Common myeloid progenitor, CD34-positive (primary cell): ENCODE measurements at regions of chr6 and their contacts with region 1.

Region 1: GRCh38 chr6:25992413-25993037 is 29.9 kb downstream of the TRIM38 start:
- DNase-seq: peak; percentile 94 to 97 (median 97)
- H3K4me3 ChIP-seq: peak overlapping the region; percentile 77 to 96 (median 81)
- H3K27ac ChIP-seq: peak overlapping the region; percentile 91 to 92
- H3K4me1 ChIP-seq: peaks cover 8 to 30% (median 20%) of the 10 kb centered on the region in 4 experiments
- H3K27me3 ChIP-seq: no peaks in the 10 kb centered on the region

Region 2: DNA sequence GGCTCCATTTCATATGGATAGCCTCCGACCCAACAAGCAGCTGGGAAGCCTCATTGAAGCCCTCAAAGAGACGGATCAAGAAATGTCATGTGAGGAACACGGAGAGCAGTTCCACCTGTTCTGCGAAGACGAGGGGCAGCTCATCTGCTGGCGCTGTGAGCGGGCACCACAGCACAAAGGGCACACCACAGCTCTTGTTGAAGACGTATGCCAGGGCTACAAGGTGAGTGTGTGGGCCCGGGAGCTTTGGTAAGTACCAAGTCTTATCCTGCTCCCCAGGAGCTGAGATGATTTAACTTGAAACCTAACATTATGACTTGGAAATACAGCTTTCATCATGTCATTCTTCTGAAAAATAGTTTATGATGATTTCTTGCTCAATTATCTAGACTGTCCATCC is 25.8 kb before region 1 on chr6:
- CTCF ChIA-PET with region 1: interaction called, 10 read pairs
- POLR2A ChIA-PET with region 1: interaction called, 3 read pairs
- DNase-seq: no peak
- H3K4me3 ChIP-seq: no peak overlapping the region
- H3K27ac ChIP-seq: no peak overlapping the region
- H3K4me1 ChIP-seq: peaks cover 17 to 31% (median 23%) of the 10 kb centered on the region in 4 experiments
- H3K27me3 ChIP-seq: no peaks in the 10 kb centered on the region

Region 3: DNA sequence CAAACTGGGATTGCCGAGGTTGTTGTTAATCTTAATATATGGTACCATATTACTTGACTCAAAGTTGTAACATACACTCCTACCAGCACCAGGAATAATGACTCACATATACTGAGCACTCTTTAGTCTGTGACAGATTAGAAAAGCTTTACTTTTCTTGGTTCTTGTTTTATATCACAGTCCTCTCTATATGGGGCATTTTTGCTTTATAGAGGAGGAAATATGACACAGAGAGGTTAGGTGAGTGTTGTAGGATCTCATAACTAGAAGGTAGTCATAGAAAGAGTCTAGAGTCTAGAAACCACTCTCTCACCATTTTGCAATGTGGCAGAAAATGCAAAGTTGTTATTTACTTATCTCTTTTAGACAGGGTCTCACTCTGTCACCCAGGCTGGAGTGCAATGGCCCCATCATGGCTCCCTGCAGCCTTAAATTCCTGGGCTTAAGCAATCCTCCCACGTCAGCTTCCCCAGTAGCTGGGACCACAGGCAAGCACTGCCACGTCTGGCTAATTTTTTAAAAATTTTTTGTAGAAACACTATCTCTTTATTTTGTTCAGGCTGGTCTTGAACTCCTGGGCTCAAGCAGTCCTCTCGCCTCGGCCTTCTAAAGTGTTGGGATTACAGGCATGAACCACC is 16.5 kb before region 1 on chr6:
- CTCF ChIA-PET with region 1: interaction called, 12 read pairs
- POLR2A ChIA-PET with region 1: interaction called, 4 read pairs
- DNase-seq: no peak
- H3K4me3 ChIP-seq: no peak overlapping the region
- H3K27ac ChIP-seq: no peak overlapping the region
- H3K4me1 ChIP-seq: peaks cover 0 to 6% (median under 1%) of the 10 kb centered on the region in 4 experiments
- H3K27me3 ChIP-seq: no peaks in the 10 kb centered on the region

Region 4: GRCh38 chr6:26003102-26003694 is 10.7 kb after region 1 on chr6:
- CTCF ChIA-PET with region 1: interaction called, 77 read pairs
- POLR2A ChIA-PET with region 1: no interaction called
- DNase-seq: peak; percentile 54 to 63 (median 61)
- H3K4me3 ChIP-seq: no peak overlapping the region
- H3K27ac ChIP-seq: no peak overlapping the region
- H3K4me1 ChIP-seq: peaks cover 0 to 10% (median 4%) of the 10 kb centered on the region in 4 experiments
- H3K27me3 ChIP-seq: no peaks in the 10 kb centered on the region

Region 5: GRCh38 chr6:26012061-26012460 is 19.5 kb after region 1 on chr6:
- CTCF ChIA-PET with region 1: interaction called, 32 read pairs
- POLR2A ChIA-PET with region 1: interaction called, 3 read pairs
- DNase-seq: no peak
- H3K4me3 ChIP-seq: no peak overlapping the region
- H3K27ac ChIP-seq: no peak overlapping the region
- H3K4me1 ChIP-seq: peaks cover under 1 to 3% (median 2%) of the 10 kb centered on the region in 4 experiments
- H3K27me3 ChIP-seq: no peaks in the 10 kb centered on the region

Region 6: DNA sequence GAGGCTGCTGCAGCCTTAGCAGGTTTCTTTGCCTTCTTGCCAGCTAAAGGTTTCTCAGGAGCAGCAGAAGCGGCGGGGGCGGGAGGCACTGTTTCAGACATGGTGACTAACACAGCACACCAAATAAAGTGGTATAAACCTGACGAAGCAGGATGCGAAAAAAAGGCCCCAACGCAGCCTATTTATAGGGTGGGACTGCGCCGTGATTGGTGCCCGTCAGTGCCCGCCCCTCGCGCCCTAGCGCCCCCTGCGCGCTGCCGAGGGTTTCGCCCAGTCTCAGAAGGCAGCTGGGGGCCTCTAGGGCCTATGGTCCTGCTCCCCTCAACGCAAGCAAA is 25.1 kb after region 1 on chr6:
- CTCF ChIA-PET with region 1: interaction called, 32 read pairs
- POLR2A ChIA-PET with region 1: interaction called, 18 read pairs
- DNase-seq: peak; percentile 84 to 94 (median 94)
- H3K4me3 ChIP-seq: peak overlapping the region in 6 of 7 experiments; percentile 3 to 70 (median 54)
- H3K27ac ChIP-seq: no peak overlapping the region
- H3K4me1 ChIP-seq: peaks cover 8 to 37% (median 25%) of the 10 kb centered on the region in 4 experiments
- H3K27me3 ChIP-seq: no peaks in the 10 kb centered on the region

Region 7: DNA sequence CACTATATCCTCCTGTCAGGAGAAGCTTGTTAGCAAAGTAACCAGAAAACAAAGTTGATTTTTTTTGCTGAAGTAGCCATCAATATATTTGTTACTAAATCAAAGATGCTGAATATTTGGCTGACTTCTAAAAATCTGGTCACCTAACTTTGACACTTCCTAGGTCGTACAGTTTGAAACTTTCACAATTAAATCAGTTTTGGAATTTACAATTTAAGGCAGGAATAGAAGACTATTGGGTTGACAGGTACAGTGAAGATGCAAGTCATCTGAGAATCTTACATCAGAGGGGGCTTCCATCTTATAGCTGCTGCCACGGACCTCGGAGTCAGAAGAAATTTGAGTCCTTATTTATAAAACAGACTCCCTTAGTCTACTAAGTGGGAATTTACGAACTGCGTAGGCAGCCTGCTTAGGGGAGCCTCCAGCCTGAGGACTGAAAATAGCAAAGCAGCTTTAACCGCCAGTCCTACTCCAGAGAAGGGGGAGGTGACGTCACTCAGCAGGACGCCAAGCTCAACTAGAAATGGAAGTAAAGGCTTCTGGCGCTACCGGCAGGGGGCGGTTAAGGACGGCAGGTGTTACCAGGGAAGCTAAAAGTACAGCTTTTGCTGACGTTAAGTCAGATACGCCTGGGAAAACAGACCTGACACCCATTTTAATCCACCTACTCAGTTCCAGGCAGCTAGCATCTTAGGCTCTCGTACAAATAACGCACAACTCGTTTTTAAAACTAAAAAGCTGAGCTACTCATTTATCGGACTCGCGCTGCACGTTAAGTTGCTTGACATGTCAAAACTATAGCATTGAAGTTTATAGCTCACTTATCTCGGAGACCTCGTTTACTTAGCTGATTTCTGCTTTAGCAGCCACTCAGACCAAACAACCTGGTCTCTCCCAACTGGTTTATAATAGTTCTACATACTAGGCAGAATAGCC is 33.6 kb after region 1 on chr6:
- CTCF ChIA-PET with region 1: interaction called, 28 read pairs
- POLR2A ChIA-PET with region 1: interaction called, 18 read pairs
- DNase-seq: peak; percentile 96 to 98 (median 97)
- H3K4me3 ChIP-seq: peak overlapping the region in 6 of 7 experiments; percentile 70 to 91 (median 85)
- H3K27ac ChIP-seq: peak overlapping the region; percentile 88 to 96
- H3K4me1 ChIP-seq: peaks cover 25 to 71% (median 41%) of the 10 kb centered on the region in 4 experiments
- H3K27me3 ChIP-seq: no peaks in the 10 kb centered on the region